Psoas muscle (tissue), 8 donors: ENCODE measurements at regions of chr9 and their contacts with region 1.

Region 1: GRCh38 chr9:126490871-126491567 is 122.7 kb upstream of the LMX1B start:
- DNase-seq: peak in 1 of 2 donors; percentile 9
- ATAC-seq: peak; percentile 55 to 87 (median 72)
- H3K4me3 ChIP-seq: no peak overlapping the region
- H3K27ac ChIP-seq: no peak overlapping the region
- H3K4me1 ChIP-seq: no peaks in the 10 kb centered on the region
- H3K27me3 ChIP-seq: no peaks in the 10 kb centered on the region
- CTCF ChIP-seq: peak; percentile 94

Region 2: GRCh38 chr9:126301985-126302603 is 188.9 kb before region 1 on chr9:
- intact Hi-C with region 1: loop called in 1 of 2 experiments (anchors 2 kb)
- DNase-seq: peak in 1 of 2 donors; percentile 25
- ATAC-seq: peak; percentile 76 to 91 (median 80)
- H3K4me3 ChIP-seq: no peak overlapping the region
- H3K27ac ChIP-seq: no peak overlapping the region
- H3K4me1 ChIP-seq: no peaks in the 10 kb centered on the region
- H3K27me3 ChIP-seq: no peaks in the 10 kb centered on the region
- CTCF ChIP-seq: peak; percentile 71

Region 3: DNA sequence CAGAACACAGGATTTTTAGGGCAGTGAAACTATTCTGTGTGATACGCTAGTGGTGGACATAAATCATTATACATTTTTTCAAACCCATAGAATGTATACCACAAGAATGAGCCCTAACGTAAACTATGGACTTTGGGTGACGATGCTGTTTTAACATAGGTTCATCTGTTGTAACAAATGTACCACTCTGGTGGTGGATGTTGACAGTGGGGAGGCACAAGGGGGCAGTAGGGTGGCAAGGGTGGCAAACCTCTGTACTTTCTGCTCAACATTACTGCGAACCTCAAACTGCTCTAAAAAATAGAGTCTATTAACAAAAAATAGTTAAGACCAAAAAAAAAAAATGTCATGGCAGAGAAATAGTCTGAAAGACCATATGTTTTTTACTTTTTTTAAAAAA is 173.5 kb before region 1 on chr9:
- intact Hi-C with region 1: loop called (anchors 5 kb)
- DNase-seq: peak in 1 of 2 donors; percentile 65
- ATAC-seq: peak; percentile 81 to 96 (median 88)
- H3K4me3 ChIP-seq: no peak overlapping the region
- H3K27ac ChIP-seq: no peak overlapping the region
- H3K4me1 ChIP-seq: no peaks in the 10 kb centered on the region
- H3K27me3 ChIP-seq: no peaks in the 10 kb centered on the region
- CTCF ChIP-seq: peak; percentile 62

Region 4: GRCh38 chr9:126503329-126504090 is 12.5 kb after region 1 on chr9:
- intact Hi-C with region 1: no loop called
- DNase-seq: peak in 1 of 2 donors; percentile 9
- ATAC-seq: no peak
- H3K4me3 ChIP-seq: no peak overlapping the region
- H3K27ac ChIP-seq: no peak overlapping the region
- H3K4me1 ChIP-seq: no peaks in the 10 kb centered on the region
- H3K27me3 ChIP-seq: no peaks in the 10 kb centered on the region
- CTCF ChIP-seq: no peak